RWPE1 (cell line): ENCODE measurements at regions of chr10 and their contacts with region 1.

Region 1: GRCh38 chr10:102225646-102226541 is at the start of gene ELOVL3:
- DNase-seq: peak; percentile 100
- H3K27ac ChIP-seq: peak within 1 kb of the TSS; percentile 16
- CTCF ChIP-seq: no peak

Region 2: DNA sequence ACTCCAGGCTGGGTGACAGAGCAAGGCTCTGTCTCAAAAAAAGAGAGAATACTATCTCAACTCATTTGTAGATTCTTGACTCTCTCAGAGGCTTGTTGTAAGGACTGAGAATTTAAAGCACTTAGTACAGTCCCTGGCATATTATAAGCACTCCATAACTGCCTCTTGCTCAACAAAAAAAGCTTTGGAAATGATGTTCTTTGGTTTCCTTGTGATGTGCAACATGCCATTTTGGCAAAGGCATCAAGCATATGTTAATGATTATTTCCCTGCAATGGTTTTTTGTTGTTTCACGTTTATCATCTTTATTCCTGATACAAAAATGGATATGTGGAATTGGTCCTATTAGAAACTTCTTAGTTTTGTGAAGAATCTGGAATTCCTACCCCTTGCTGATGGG is 58.0 kb before region 1 on chr10:
- CTCF ChIA-PET with region 1: interaction called, 16 read pairs
- POLR2A ChIA-PET with region 1: interaction called, 6 read pairs
- DNase-seq: no peak
- H3K27ac ChIP-seq: no peak overlapping the region
- CTCF ChIP-seq: no peak

Region 3: DNA sequence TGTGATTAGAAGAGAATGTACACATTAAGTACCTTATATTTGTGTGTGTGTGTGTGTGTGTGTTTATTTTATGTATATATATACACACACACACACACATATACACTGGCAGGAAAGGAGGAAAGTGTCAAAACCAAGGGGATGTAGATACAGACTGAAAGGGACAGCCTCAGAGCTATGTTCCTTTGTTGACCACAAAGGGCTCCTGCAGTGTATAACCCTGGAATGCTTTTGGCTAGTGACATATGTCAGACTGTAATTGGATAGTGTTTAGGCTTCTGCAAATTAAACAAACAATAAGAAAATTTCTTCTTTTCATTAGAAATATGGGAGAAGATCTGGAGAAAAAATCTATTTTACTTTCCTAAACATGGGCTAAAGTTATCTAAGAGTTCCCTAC is 35.3 kb after region 1 on chr10:
- CTCF ChIA-PET with region 1: no interaction called
- POLR2A ChIA-PET with region 1: no interaction called
- DNase-seq: no peak
- H3K27ac ChIP-seq: no peak overlapping the region
- CTCF ChIP-seq: no peak

Region 4: DNA sequence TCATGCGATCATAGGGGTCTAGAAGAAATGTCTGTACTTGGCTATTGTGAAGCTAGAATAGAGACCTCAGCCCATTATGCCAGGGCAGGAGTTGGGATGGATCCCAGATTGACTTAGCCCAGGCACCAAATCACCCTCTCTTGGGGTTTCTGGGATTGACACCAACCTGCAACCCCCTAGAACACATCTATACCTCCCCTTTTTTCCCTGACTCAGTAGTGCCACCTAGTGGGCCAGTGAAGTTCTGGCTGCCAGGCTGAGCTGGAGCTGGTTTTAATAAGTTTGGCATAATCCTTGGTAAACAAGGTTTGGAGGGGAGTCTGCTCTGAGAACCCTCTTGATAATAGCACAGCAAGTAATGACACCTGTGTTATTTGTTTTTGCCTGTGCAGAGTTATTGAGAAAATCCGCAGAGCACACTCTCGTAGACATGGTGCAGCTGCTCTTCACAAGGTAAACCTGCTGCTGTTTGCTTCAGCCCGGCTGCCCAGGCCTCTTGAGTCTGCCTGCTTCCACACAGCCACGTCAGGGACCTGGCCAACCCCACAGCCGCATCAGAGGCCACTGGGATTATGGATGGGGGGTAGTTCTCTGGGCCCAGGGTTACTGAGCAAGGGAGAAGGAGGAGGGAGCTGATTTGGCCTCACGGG is 126.3 kb after region 1 on chr10:
- CTCF ChIA-PET with region 1: interaction called, 370 read pairs
- POLR2A ChIA-PET with region 1: no interaction called
- DNase-seq: peak; percentile 75
- H3K27ac ChIP-seq: no peak overlapping the region
- CTCF ChIP-seq: peak; percentile 94

Region 5: DNA sequence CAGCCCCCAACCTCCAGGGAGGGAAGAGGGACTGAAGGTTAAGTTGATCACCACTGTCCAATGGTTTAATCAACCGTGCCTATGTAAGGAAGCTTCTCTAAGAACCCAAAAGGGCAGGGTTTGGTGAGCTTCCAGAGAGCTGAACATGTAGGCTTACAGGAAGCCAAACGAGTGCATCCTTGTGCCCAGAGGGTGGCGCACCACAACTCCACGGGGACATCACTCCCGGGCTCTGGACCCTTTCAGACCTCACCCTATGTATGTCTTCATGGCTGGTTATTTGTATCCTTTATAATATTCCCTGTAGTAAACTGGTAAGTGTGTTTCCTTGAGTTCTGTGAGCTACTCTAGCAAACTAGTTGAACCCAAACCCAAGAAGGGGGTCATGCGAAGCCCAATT is 158.2 kb after region 1 on chr10:
- CTCF ChIA-PET with region 1: interaction called, 14 read pairs
- POLR2A ChIA-PET with region 1: no interaction called
- DNase-seq: no peak
- H3K27ac ChIP-seq: no peak overlapping the region
- CTCF ChIP-seq: no peak

Region 6: GRCh38 chr10:102399217-102400089 is 173.6 kb after region 1 on chr10:
- CTCF ChIA-PET with region 1: interaction called, 79 read pairs
- POLR2A ChIA-PET with region 1: interaction called, 3 read pairs
- DNase-seq: peak; percentile 84
- H3K27ac ChIP-seq: peak overlapping the region; percentile 85
- CTCF ChIP-seq: peak; percentile 96